Activated CD8-positive, alpha-beta T cell treated with anti-CD3 and anti-CD28 coated beads, Interleukin-2, amount 10 ng/mL, durations not matched to agents 7 days and 5 days (primary cell): ENCODE measurements at regions of chr1 and their contacts with region 1.

Region 1: DNA sequence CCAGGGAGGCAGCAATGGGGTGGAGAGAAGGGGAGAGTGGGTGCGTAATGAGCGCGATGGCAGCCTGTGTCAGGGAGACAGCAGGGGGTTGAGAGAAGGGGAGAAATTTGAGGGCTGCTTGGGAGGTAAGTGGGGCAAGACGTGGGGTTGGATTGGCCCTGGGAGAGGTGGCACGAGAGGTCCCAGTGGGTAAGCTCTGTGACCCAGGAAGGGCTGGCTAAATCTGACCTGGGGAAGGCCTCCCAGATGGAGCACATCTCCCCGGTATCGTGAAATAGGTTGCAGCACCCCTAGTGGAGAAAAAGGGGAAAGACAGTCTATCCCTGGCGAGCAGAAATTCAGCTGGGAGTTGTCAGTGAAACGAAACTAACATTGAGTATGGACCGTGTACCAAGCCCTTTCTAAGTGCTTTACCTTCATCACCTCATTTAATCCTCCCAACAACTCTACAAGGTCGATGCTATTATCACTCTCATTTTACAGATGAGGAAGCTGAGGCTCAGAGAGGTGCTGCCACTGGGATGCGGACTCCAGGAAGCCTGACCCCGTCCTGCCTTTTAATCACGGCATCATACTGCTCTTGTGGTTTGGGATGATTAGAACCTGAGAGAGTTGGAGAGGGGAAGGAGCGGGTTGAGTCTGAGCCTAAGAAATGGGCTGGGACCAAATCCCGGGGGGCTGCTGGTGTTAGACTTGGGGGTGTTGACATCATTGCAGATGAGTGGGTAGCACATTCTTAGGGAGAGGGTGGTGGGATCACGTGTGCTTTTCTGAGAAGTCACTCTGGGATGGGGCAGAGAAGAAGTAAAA is 56.6 kb upstream of the RPL11 start:
- DNase-seq: peak; percentile 76
- ATAC-seq: peak; percentile 83
- H3K4me3 Mint-ChIP-seq: peak overlapping the region; percentile 63
- H3K27ac Mint-ChIP-seq: peak overlapping the region; percentile 81
- H3K4me1 Mint-ChIP-seq: peaks cover 29% of the 10 kb centered on the region
- H3K27me3 Mint-ChIP-seq: peaks cover 4% of the 10 kb centered on the region

Region 2: DNA sequence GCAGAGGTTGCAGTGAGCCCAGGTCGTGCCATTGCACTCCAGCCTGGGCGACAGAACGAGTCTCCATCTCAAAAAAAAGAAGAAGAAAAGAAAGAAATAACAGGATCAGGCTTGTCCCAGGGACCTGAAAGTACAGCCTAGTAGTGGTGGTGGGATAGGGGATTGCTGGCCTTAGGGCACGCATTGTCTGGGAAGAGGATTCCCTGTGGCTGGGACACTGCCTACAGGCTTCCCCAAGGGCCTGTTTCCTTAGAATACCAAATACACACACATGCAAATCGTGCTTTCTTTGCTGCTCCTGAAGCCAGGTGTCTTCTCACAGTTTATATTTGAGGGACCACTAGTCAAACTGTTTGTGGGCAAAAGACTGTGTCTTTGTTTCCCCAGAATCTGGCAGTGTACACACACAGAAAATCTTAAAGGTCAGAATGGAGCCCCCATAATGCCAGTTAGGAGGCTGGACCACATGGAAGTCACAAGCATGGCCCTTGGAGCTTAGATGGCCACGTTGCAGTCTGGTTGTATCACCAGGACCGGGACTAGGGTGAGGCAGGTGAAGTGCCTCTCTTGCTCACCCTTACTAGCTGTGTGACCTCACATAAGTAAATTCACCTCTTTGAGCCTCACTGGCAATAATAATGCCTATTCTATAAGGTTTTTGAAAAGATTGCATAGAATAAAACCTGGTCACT is 138.4 kb before region 1 on chr1:
- CTCF ChIA-PET with region 1: interaction called, 86 read pairs
- POLR2A ChIA-PET with region 1: no interaction called
- DNase-seq: no peak
- ATAC-seq: no peak
- H3K4me3 Mint-ChIP-seq: no peak overlapping the region
- H3K27ac Mint-ChIP-seq: no peak overlapping the region
- H3K4me1 Mint-ChIP-seq: peaks cover 2% of the 10 kb centered on the region
- H3K27me3 Mint-ChIP-seq: peaks cover 11% of the 10 kb centered on the region

Region 3: DNA sequence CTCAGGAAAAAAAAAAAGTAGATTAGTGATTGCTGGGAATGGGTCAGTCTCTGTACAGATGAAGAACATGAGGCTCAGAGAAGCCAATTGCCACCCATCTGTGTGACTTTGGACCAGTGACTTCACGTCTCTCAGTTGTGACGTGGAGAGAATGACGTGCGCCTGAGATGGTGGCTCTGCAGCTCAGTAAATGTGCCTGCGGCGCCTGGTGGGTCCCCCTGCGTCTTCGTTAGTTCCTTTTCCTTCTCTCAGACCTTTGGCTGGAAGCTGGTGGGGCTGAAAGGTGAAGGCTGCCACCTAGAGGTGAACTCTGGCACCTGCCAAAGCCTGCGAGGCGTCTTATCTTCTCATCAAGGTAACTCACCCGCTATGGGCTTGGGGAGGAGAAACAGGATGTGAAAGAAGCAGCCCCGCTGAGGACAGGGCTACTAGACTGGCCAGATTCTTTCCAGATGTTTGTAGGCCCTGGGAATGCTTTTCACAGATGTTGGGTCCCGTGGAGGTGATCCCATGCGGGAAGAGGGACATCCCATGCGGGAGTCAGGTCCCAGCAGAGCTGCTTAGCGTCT is 95.3 kb before region 1 on chr1:
- CTCF ChIA-PET with region 1: interaction called, 1,062 read pairs
- POLR2A ChIA-PET with region 1: interaction called, 20 read pairs
- DNase-seq: peak; percentile 97
- ATAC-seq: peak; percentile 97
- H3K4me3 Mint-ChIP-seq: peak overlapping the region; percentile 5
- H3K27ac Mint-ChIP-seq: peak overlapping the region; percentile 64
- H3K4me1 Mint-ChIP-seq: peaks cover 21% of the 10 kb centered on the region
- H3K27me3 Mint-ChIP-seq: no peaks in the 10 kb centered on the region

Region 4: DNA sequence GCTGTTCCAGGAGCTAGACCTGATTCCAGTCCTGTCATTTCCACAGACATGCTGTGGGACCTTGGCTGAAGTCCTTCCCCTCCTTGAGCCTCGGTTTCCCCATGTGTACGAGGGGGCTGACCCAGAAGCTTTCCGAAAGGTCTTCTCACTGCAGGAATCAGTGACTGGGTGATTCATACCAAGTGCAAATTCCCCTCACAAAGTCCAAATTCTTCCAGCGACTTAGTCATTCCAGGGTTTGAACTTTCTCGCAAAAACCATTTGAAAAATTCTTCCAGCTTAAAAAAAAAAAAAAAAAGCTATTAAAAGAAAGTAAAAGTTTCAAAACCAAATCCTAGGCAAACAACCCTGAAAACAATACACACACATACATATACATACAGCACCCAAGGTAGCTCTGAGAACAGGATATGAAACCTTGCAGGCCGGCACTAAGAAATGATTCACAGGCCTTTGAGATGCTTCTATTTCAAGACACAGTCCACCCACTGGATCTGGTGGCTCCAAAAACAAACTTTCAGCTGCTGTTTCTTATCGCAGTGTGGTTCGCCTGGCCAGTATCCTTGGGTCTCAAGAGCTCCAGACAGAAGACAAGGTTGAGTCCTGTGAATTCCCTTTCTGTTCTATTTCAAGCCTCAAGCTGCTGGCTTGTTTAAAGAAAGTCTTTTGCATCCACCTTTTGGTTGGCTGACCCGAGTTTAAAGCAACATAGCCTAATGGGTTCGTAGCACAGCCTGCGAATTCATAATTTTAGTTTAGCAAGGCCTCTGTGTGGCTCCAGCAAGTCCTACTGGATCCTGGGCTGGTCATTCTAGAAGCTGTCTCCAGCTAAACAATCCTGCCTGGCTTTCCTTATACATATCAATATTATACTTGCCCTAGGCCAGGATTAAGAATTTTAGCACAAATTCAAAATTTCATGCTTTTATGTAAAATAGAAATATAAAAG is 57.7 kb before region 1 on chr1:
- CTCF ChIA-PET with region 1: interaction called, 144 read pairs
- POLR2A ChIA-PET with region 1: interaction called, 6 read pairs
- DNase-seq: peak; percentile 70
- ATAC-seq: peak; percentile 89
- H3K4me3 Mint-ChIP-seq: peak overlapping the region; percentile 48
- H3K27ac Mint-ChIP-seq: peak overlapping the region; percentile 90
- H3K4me1 Mint-ChIP-seq: peaks cover 65% of the 10 kb centered on the region
- H3K27me3 Mint-ChIP-seq: no peaks in the 10 kb centered on the region

Region 5: DNA sequence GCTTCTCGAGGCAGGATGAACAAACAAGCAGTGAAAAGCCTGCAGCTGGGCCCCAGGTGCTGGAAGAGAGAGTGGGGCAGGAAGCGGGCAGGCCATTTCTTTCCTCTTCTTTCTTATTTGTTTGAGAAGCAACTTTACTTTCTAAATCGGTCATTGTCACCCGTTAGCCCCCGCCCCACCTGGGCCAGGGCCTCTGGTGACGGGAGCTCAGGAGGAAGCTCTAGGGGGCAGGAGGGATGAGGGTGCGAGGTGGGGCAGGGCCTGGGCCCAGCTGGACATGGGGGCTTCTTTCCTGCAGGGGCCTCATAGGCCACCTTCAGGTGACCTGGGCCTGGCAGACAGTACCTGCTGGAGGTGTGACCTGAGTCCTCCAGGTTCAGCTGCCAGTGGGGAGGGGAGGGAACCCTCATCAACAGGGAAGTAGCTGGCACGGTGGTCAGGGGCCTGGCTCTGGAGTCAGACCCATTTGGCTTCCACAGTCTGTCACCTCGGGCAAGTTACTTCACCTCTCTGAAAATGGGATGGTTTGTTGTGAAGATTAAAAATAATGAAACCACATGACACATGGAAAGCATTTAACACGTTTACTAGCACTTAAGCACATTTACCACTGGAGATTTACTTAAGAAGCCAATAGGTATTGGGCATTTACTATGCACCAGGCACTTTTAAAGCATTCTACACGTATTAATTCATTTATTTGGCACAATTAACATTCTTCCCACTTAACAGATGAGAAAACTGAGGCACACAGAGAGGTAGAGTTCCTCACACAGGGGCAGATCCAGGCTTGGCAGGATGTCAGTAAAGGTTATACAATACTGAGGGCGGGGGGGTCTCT is 21.6 kb before region 1 on chr1:
- CTCF ChIA-PET with region 1: interaction called, 121 read pairs
- POLR2A ChIA-PET with region 1: no interaction called
- DNase-seq: peak; percentile 73
- ATAC-seq: peak; percentile 66
- H3K4me3 Mint-ChIP-seq: peak overlapping the region; percentile 53
- H3K27ac Mint-ChIP-seq: peak overlapping the region; percentile 96
- H3K4me1 Mint-ChIP-seq: peaks cover 68% of the 10 kb centered on the region
- H3K27me3 Mint-ChIP-seq: no peaks in the 10 kb centered on the region

Region 6: GRCh38 chr1:23664837-23665795 is 30.1 kb after region 1 on chr1:
- CTCF ChIA-PET with region 1: interaction called, 23 read pairs
- POLR2A ChIA-PET with region 1: no interaction called
- DNase-seq: peak; percentile 39
- ATAC-seq: peak; percentile 36
- H3K4me3 Mint-ChIP-seq: no peak overlapping the region
- H3K27ac Mint-ChIP-seq: peak overlapping the region; percentile 53
- H3K4me1 Mint-ChIP-seq: peaks cover 12% of the 10 kb centered on the region
- H3K27me3 Mint-ChIP-seq: no peaks in the 10 kb centered on the region

Region 7: GRCh38 chr1:23763041-23763577 is 128.1 kb after region 1 on chr1:
- CTCF ChIA-PET with region 1: no interaction called
- POLR2A ChIA-PET with region 1: no interaction called
- DNase-seq: no peak
- ATAC-seq: no peak
- H3K4me3 Mint-ChIP-seq: no peak overlapping the region
- H3K27ac Mint-ChIP-seq: no peak overlapping the region
- H3K4me1 Mint-ChIP-seq: no peaks in the 10 kb centered on the region
- H3K27me3 Mint-ChIP-seq: no peaks in the 10 kb centered on the region